ENCODE measurements at regions of chr12 and their contacts with region 1.

Region 1: DNA sequence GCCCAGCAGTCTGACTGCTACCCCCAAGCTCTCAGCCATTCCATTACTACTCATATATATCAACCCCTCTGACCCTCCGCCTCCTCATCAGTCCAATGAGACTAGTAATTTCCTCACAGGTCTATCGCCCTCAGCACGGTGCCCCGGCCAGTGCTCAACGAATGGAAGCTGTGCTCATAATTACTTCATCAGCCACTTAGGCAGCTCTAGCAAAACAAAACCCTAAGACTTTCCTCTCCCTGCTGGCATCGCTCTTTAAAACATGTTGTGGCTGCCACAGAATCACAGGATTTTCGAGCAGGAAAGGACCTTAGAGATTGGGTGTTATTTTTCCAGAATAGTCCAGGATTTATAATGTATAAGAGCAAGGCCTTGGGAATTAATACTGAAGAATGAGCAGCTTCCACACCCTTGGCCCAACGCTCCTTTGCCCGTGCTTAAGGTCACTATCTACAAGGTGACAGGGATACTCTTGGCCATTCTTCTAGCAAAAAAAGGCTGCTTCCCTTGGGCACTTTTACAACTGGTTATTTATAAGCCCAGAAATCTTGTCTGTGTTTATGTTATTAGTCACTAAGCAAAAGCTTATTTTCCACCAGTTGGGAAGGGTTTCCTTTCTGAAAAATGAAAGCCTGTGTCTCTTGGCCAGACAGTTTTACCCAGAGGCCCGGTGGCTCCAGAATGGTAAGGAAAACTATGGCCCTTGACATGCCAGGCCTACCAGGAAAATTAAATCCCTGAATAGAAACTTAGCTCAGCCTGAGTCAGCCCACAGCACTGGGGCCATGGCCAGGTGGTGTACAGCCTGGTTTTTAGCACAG is 48.0 kb downstream of the NUAK1 start:
- DNase-seq: peak; percentile 85 to 86
- ATAC-seq: peak; percentile 87
- H3K4me3 ChIP-seq: no peak overlapping the region
- H3K27ac ChIP-seq: peak overlapping the region; percentile 79 to 99
- H3K4me1 ChIP-seq: peaks cover 2 to 13% of the 10 kb centered on the region in 2 donors
- H3K27me3 ChIP-seq: no peaks in the 10 kb centered on the region

Region 2: GRCh38 chr12:105948331-105948730 is 142.5 kb before region 1 on chr12:
- intact Hi-C with region 1: loop called (anchors 5 to 10 kb)
- DNase-seq: peak in 1 of 2 donors; percentile 50
- ATAC-seq: peak; percentile 64
- H3K4me3 ChIP-seq: no peak overlapping the region
- H3K27ac ChIP-seq: peak overlapping the region; percentile 65 to 76
- H3K4me1 ChIP-seq: peaks cover 2 to 12% of the 10 kb centered on the region in 2 donors
- H3K27me3 ChIP-seq: no peaks in the 10 kb centered on the region